ENCODE measurements at regions of chr2 and their contacts with region 1.

Region 1: DNA sequence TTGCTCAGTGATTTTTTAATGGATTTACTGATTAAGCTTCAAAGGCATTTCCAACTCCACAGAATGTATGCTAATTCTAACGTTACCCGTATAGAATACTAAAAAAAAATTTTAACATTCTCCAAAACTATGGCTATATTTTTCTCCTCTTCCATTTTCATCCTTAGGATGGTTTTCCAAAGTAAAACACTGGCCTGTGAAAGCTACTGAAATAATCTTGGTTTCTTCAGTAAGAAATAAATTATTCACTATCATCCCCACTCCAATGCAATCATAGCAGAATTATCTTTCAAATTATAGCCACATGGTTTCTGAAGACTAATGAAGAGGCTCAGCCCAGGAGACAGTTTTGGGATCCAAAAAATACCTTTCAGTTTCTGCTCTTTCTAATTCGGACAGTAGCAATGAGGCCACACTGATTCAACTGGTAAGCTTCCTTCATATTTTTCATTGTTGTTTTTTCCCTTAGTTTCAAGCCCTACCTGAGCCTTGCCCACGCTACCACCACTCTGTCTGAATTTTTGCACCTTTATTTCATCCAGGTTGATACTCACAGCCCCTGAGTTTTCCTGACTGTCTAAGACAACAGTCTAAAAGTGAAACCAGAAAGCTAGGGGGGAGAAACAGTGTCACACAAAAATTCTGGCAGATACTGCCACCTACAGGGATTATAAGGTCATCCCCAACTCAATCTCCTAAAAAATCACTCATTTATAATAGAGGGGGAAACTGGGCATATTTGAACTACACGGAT is 887.9 kb downstream of the NRXN1 start:
- DNase-seq: no peak
- ATAC-seq: peak; percentile 85

Region 2: GRCh38 chr2:49616800-49617199 is 527.2 kb before region 1 on chr2:
- intact Hi-C with region 1: loop called (anchors 10 kb)
- DNase-seq: no peak
- ATAC-seq: no peak

Region 3: DNA sequence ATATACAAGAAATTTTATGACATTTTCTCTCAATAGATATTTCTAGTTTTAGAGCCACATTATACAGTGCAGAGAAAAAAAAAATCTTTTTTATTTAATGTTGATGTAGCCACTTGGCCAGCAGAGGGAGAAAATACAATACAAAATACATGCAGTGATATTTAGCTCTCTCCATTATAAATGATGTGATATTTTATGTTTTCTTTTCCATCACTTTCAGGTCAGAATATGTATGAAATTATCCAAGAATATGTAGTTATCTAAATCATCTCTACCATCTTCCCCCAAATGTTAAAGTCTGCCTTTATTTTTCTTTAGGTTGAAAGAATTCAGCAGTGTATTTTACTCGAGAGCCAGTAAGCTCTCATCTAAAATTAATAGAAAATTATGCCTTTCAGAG is 456.1 kb before region 1 on chr2:
- intact Hi-C with region 1: loop called (anchors 5 kb)
- DNase-seq: no peak
- ATAC-seq: no peak

Region 4: DNA sequence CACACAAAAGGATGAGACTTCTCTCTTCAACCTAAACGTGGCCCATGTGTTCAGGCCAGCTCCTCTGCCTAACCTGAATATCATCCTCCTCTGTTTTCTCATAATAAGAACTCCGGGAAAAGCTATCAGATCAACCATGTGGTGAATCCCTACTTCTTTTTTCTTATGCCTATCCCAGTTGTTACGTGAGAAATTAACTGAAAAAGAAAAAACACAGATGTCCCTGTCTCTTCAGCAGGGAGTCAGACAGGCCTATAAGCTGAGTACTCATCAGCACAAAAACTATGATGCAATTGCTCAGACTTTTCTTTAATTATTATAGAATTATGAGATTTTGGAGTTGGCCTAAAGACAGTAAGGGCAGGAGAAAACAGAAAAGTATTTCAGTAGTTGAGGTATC is 376.7 kb before region 1 on chr2:
- intact Hi-C with region 1: loop called (anchors 10 kb)
- DNase-seq: no peak
- ATAC-seq: no peak

Region 5: DNA sequence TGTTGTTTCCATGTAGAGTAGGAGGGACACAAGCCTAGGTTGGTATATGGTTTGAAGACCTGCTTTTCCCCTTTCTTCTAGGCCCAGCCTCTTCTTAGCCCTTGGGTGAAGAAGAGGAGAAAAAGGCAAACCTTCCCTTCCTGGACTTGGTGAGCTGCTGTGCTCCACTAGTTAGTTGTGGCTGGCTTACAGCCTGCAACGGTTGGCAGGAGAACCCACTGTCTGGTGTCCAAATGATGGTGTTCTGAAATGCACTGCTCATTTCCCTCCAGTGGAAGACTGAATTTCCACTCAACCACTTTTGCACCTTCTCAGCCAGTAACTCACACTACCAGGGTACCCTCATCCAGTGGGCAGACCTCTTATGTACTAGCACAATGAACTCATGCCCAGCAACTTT is 63.9 kb after region 1 on chr2:
- intact Hi-C with region 1: no loop called
- DNase-seq: no peak
- ATAC-seq: no peak

Measured in left ventricle myocardium superior (tissue), 1 donor.